Common myeloid progenitor, CD34-positive (primary cell): ENCODE measurements at regions of chr3 and their contacts with region 1.

Region 1: DNA sequence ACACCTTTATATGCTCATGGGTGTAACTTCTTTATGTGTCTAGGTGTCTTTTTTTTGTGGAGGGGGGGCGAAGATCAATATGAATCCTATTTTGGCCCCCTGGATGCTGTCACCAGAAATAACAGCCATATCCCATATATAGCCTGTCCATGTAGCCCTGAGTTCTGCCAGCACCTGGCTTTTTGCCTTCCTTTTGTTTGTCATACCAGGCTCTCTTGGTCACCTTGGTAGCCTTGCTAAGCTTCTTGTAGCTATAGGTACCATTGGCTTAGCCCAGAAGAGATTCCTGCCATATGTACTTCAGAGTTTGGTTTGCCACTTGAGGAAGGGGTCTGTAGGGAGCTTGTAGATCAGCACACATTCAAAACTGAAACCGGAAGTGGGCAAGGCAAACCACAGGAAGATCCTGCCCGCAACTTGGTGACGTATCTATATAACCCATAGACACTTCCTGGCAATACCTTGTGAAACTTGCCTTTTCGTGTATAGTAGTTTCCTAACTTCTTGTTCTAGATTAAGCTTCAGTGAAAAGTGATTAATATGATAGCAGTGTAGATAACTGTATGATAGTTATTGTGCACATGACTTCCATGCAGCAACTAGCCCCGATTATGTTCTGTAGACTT is 11.9 kb downstream of the RASA2 start:
- DNase-seq: peak; percentile 99 to 100 (median 99)
- H3K4me3 ChIP-seq: peak overlapping the region in 6 of 7 experiments; percentile 46 to 76 (median 50)
- H3K27ac ChIP-seq: peak overlapping the region; percentile 82 to 87
- H3K4me1 ChIP-seq: peaks cover 18 to 33% (median 25%) of the 10 kb centered on the region in 4 experiments
- H3K27me3 ChIP-seq: no peaks in the 10 kb centered on the region

Region 2: DNA sequence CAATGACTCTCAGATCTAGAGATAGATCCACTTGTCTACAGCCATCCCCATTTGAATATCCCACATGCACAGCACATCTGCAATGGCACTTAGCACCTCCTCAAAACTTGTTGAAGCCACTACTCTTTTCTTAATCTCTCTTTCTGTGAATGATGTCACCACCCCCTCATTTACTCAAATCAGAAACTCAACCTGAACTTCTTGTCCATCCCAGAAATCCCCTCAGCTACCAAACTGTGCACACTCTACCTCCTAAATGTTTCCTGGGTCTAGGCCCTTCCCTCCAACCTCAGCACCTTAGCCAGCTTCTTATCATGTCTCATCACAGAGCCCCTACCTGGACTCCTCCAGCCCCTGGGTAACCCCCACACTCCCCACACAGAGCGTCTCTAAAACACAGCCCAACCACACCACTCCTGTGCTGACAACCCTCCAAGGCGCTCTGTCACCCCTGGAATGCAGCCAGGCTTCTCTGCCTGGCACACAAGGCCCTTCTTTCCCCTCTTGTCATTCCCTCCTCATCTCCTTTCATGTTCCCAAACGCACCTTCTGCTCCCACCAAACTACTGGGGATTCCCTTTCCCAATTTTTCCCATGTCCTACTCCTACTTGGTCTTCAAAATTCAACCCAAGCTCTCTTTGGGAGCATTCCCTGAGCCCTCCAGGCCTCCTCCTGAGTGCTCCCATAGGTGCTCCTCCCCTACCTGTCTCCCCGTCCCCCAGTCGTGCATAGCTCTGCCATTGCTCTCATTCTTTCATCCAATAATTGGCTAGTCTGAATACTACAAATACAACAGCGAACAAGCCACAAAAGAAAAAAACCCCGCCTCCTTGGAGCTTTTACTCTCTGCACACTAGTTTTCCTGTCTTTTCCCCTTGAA is 170.2 kb before region 1 on chr3:
- CTCF ChIA-PET with region 1: no interaction called
- POLR2A ChIA-PET with region 1: no interaction called
- DNase-seq: no peak
- H3K4me3 ChIP-seq: no peak overlapping the region
- H3K27ac ChIP-seq: no peak overlapping the region
- H3K4me1 ChIP-seq: peaks cover 0 to 10% (median under 1%) of the 10 kb centered on the region in 4 experiments
- H3K27me3 ChIP-seq: no peaks in the 10 kb centered on the region

Region 3: DNA sequence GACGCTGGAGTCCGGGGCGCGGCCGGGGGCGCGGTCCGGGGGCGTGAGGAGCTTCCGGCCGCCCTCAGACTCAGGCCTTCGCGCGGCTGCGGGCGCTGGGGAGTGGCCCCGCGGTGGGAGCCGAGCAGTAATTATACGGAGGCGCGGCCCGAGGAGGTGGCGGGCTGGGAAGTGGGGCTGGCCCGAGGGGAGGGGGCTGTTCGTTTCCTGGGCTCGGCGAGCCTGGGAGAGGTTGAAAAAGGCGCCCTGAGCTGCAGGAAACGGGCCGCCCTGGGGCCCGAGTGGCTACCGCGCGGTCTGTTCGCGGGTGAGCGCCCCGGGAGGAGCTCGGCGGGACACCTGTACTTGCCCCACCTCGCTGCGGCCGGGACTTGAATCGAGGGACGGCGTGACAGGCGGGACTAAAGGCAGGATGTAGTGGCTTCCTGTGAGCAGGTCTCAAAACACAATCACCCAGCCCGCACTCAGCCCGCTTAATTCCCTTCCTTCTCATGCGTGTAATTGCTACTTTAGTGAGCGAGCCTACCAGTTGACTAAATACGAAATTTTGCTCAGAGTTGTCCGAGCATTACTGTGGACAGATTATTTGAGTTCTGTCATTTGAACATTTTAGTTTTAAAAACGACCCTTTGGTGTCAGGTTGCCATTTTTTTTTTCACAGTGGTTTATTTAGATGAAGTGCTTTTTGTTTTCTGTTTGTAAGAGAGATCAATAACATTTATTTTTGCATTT is 11.0 kb before region 1 on chr3:
- CTCF ChIA-PET with region 1: interaction called, 4 read pairs
- POLR2A ChIA-PET with region 1: interaction called, 12 read pairs
- DNase-seq: peak; percentile 82 to 94 (median 89)
- H3K4me3 ChIP-seq: peak overlapping the region; percentile 62 to 87 (median 79)
- H3K27ac ChIP-seq: peak overlapping the region; percentile 54 to 82
- H3K4me1 ChIP-seq: peaks cover 30 to 57% (median 37%) of the 10 kb centered on the region in 4 experiments
- H3K27me3 ChIP-seq: no peaks in the 10 kb centered on the region

Region 4: DNA sequence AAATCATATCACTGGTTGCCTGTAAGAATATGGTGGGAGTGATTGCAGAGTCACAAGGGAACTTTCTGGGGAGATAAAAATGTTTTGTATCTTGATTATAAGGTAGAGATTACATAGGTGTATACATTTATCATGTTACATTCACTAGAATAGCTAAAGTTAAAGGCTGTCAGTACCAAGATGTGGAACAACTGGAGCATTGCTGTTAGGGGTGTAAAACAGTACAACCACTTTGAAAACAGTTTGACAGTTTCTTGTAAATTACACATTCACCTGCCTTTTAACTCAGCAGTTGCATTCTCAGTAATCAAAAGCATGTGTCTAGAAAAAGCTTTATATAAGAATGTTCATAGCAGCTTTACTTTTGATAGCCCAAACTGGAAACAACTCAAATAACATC is 15.7 kb after region 1 on chr3:
- CTCF ChIA-PET with region 1: interaction called, 21 read pairs
- POLR2A ChIA-PET with region 1: no interaction called
- DNase-seq: no peak
- H3K4me3 ChIP-seq: no peak overlapping the region
- H3K27ac ChIP-seq: no peak overlapping the region
- H3K4me1 ChIP-seq: peaks cover 0 to 5% (median 0%) of the 10 kb centered on the region in 4 experiments
- H3K27me3 ChIP-seq: no peaks in the 10 kb centered on the region

Region 5: DNA sequence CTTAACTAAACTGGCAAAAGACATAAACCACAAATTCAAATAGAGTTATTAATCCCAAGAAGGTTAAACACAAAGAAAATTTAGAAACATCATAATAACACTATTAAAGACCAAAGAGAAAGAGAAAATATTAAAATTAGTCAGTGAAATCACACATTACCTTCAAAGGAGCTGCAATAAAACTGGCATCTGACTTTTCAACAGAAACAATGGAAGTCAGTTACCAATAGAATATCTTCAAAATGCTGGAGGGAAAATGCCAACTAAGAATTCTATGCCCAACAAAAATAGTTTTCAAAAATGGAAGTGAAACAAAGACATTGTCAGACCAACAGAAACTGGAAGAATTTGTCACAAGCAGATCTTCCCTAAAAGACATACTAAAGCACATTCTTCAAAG is 170.7 kb after region 1 on chr3:
- CTCF ChIA-PET with region 1: no interaction called
- POLR2A ChIA-PET with region 1: no interaction called
- DNase-seq: peak in 2 of 3 donors; percentile 40 to 50
- H3K4me3 ChIP-seq: no peak overlapping the region
- H3K27ac ChIP-seq: no peak overlapping the region
- H3K4me1 ChIP-seq: no peaks in the 10 kb centered on the region
- H3K27me3 ChIP-seq: no peaks in the 10 kb centered on the region